CD8-positive, alpha-beta T cell (primary cell): ENCODE measurements at regions of chr2 and their contacts with region 1.

Region 1: GRCh38 chr2:46887028-46887885 is 28.3 kb downstream of the MCFD2 start:
- DNase-seq: no peak
- ATAC-seq: no peak
- H3K4me3 ChIP-seq: no peak overlapping the region
- H3K4me3 Mint-ChIP-seq: no peak overlapping the region
- H3K27ac ChIP-seq: no peak overlapping the region
- H3K27ac Mint-ChIP-seq: no peak overlapping the region
- H3K4me1 ChIP-seq: no peaks in the 10 kb centered on the region
- H3K4me1 Mint-ChIP-seq: peaks cover 2% of the 10 kb centered on the region
- H3K27me3 ChIP-seq: no peaks in the 10 kb centered on the region
- H3K27me3 Mint-ChIP-seq: peaks cover 2% of the 10 kb centered on the region
- CTCF ChIP-seq: no peak

Region 2: DNA sequence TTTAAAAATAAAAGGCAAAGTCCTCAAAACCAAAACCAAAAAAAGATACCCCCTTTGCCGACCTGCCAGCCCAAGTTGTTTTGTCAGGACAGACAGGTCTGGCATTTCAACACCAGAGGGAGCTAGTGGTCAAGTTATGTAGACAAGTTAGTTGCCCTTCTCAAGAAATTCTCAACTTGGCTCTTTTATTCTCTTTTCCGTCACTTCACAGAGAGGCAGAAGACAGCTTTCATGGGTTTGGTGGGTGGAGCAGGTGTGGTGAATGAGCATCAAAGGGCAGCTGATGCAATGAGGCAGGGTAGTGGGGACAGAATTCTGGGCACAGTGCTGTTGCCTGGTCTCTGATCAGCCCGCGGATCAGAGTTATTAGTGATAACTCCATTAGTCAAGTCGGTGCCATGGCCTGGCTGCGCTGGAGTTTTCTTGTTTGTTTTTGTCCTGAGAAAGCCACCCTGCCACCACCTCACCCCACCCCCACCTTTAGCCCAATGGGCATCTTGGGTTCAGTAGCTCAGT is 893.7 kb before region 1 on chr2:
- CTCF ChIA-PET with region 1: interaction called, 8 read pairs
- POLR2A ChIA-PET with region 1: no interaction called
- intact Hi-C with region 1: loop called (anchors 5 kb)
- DNase-seq: peak; percentile 12 to 79 (median 58)
- ATAC-seq: peak; percentile 75
- H3K4me3 ChIP-seq: no peak overlapping the region
- H3K4me3 Mint-ChIP-seq: no peak overlapping the region
- H3K27ac ChIP-seq: no peak overlapping the region
- H3K27ac Mint-ChIP-seq: no peak overlapping the region
- H3K4me1 ChIP-seq: peaks cover 4% of the 10 kb centered on the region
- H3K4me1 Mint-ChIP-seq: peaks cover 5% of the 10 kb centered on the region
- H3K27me3 ChIP-seq: no peaks in the 10 kb centered on the region
- H3K27me3 Mint-ChIP-seq: no peaks in the 10 kb centered on the region
- CTCF ChIP-seq: peak; percentile 65

Region 3: DNA sequence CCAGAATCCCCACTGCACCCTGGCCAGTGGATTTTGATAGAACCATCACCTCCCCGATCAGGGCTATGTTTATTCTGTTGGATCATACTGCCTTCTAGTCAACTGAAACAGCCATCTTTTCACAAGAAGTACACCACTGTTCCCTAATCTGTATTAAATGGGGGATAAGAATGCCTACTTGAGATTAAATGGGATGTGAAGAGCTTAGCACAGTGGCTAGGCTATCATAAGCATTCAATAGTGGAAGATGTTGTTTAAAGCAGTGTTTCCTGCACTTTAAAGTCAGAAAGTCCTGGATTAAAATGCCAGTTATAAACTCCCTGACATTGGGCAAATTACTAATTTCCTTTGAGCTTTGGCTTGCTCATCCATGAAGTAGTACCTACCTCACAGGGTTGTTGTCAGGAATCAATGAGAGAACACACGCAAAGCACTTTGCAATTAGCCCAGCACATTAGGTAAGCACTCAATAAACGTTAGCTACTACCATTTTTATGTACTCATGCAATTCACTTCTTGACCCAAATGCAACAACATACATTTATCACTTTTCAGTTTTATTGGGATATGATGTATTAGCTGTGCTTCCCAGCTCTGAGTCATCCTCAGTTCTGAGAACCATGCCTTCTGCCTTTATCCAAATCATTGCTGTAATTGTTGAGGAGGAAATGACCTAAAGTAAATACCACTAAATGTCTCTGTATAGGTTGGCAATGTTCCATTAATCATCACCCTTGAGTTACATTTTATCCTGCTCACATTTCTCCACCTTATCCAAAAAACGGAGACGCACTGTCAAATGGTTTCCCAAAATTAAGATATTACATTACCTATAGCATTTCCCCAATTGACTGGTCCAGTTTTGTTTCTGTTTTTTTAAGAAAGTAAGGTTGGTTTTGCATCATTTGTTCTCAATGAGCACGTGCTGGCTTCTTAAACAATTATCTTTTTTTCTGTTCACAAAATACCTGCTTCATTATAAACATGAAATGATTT is 405.8 kb before region 1 on chr2:
- CTCF ChIA-PET with region 1: no interaction called
- POLR2A ChIA-PET with region 1: no interaction called
- intact Hi-C with region 1: no loop called
- DNase-seq: no peak
- ATAC-seq: no peak
- H3K4me3 ChIP-seq: no peak overlapping the region
- H3K4me3 Mint-ChIP-seq: no peak overlapping the region
- H3K27ac ChIP-seq: no peak overlapping the region
- H3K27ac Mint-ChIP-seq: no peak overlapping the region
- H3K4me1 ChIP-seq: peaks cover 14% of the 10 kb centered on the region
- H3K4me1 Mint-ChIP-seq: peaks cover 25% of the 10 kb centered on the region
- H3K27me3 ChIP-seq: no peaks in the 10 kb centered on the region
- H3K27me3 Mint-ChIP-seq: no peaks in the 10 kb centered on the region
- CTCF ChIP-seq: no peak

Region 4: GRCh38 chr2:46632349-46632748 is 254.9 kb before region 1 on chr2:
- CTCF ChIA-PET with region 1: no interaction called
- POLR2A ChIA-PET with region 1: no interaction called
- intact Hi-C with region 1: loop called in 1 of 2 experiments (anchors 5 kb)
- DNase-seq: peak in 2 of 9 experiments; percentile 29 to 47
- ATAC-seq: no peak
- H3K4me3 ChIP-seq: no peak overlapping the region
- H3K4me3 Mint-ChIP-seq: no peak overlapping the region
- H3K27ac ChIP-seq: no peak overlapping the region
- H3K27ac Mint-ChIP-seq: no peak overlapping the region
- H3K4me1 ChIP-seq: peaks cover 13% of the 10 kb centered on the region
- H3K4me1 Mint-ChIP-seq: peaks cover 19% of the 10 kb centered on the region
- H3K27me3 ChIP-seq: no peaks in the 10 kb centered on the region
- H3K27me3 Mint-ChIP-seq: no peaks in the 10 kb centered on the region
- CTCF ChIP-seq: peak; percentile 41

Region 5: GRCh38 chr2:46657042-46657504 is 230.2 kb before region 1 on chr2:
- CTCF ChIA-PET with region 1: interaction called, 7 read pairs
- POLR2A ChIA-PET with region 1: no interaction called
- intact Hi-C with region 1: loop called in 1 of 2 experiments (anchors 2 kb)
- DNase-seq: peak in 2 of 9 experiments; percentile 27 to 38
- ATAC-seq: peak; percentile 46
- H3K4me3 ChIP-seq: no peak overlapping the region
- H3K4me3 Mint-ChIP-seq: no peak overlapping the region
- H3K27ac ChIP-seq: no peak overlapping the region
- H3K27ac Mint-ChIP-seq: no peak overlapping the region
- H3K4me1 ChIP-seq: no peaks in the 10 kb centered on the region
- H3K4me1 Mint-ChIP-seq: no peaks in the 10 kb centered on the region
- H3K27me3 ChIP-seq: no peaks in the 10 kb centered on the region
- H3K27me3 Mint-ChIP-seq: peaks cover 4% of the 10 kb centered on the region
- CTCF ChIP-seq: no peak

Region 6: GRCh38 chr2:47155091-47155876 is 268.0 kb after region 1 on chr2 and contains the start of gene STPG4:
- CTCF ChIA-PET with region 1: no interaction called
- POLR2A ChIA-PET with region 1: no interaction called
- intact Hi-C with region 1: no loop called
- DNase-seq: peak in 1 of 9 experiments; percentile 45
- ATAC-seq: peak; percentile 11
- H3K4me3 ChIP-seq: no peak within 1 kb of the TSS
- H3K4me3 Mint-ChIP-seq: no peak within 1 kb of the TSS
- H3K27ac ChIP-seq: peak within 1 kb of the TSS in 1 of 2 experiments; percentile 55
- H3K27ac Mint-ChIP-seq: peak within 1 kb of the TSS; percentile 55
- H3K4me1 ChIP-seq: no peaks in the 10 kb centered on the region
- H3K4me1 Mint-ChIP-seq: peaks cover 11% of the 10 kb centered on the region
- H3K27me3 ChIP-seq: no peaks in the 10 kb centered on the region
- H3K27me3 Mint-ChIP-seq: no peaks in the 10 kb centered on the region
- CTCF ChIP-seq: no peak
- total RNA-seq, gene STPG4: 0.39 TPM in 1 of 2 experiments, not detected in the other